GM13977 (cell line): ENCODE measurements at regions of chr14 and their contacts with region 1.

Region 1: DNA sequence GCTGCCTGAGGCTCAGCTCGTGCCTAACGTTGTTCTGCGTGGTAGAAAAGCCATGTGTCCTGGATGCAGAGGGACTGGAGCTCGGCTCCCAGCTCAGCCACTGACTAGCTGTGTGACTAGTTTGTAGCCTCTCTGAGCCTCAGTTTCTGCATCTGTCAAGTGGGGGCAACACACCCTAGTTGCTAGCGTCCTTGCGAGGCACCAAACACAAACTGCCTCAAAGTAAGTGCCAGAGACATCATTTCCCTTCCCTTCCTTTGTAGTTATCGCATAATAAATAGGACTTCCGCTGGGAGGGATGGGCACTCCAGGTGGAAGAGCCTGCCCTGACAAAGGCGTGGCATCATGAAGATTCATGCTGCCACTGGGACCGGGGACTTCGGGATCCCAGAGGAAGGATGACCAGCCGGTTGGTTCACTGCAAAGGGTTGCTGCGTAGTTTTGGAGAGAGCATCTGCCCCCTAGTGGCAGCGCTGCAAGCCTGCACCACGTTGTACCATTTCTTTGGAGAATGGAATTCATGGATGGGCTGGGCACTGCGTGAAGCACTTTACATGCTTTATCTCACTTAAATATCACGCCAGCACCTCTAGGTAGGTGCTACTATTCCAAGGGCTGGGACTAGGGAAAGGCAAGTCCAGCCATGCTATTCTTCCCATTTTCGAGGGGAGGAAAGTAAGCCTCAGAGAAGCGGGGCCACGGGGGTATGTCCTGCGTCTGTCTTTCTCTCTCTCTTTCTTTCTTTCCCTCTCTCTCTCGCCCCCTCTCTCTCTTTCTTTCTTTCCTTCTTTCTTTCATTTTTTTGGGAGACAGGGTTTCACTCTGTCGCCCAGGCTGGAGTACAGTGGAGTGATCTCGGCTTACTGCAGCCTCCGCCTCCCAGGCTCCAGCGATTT is 4.6 kb downstream of the CCDC197 start:
- DNase-seq: peak; percentile 79
- CTCF ChIP-seq: peak; percentile 97

Region 2: GRCh38 chr14:93939304-93940229 is 62.2 kb before region 1 on chr14:
- in situ Hi-C with region 1: loop called (anchors 5 kb)
- DNase-seq: peak; percentile 91
- CTCF ChIP-seq: peak; percentile 93